ENCODE measurements at regions of chr12 and their contacts with region 1.

Region 1: DNA sequence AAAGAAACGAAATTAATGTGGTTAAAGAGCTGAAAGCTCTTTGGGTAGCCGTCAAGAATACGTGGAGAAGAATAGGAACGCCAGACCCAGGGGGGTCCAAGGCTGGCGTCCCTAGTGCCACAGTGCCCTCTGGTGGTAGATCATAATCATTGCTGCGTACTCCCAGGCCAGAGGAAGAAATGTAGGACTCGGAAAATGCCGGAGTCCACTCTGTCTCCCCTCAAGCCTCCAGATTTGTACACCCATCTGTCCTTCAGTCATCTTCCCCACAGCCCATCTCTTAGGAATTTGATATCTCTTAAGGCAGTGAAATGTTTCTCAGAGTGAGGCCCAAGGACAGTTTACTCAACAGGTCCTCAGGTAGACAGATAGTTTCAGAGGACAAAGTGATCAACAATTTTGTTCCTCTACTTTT is 25.4 kb upstream of the PLEKHG6 start:
- DNase-seq: peak; percentile 28 to 85 (median 48)
- ATAC-seq: peak; percentile 90
- H3K4me3 ChIP-seq: no peak overlapping the region
- H3K4me3 Mint-ChIP-seq: no peak overlapping the region
- H3K27ac ChIP-seq: no peak overlapping the region
- H3K27ac Mint-ChIP-seq: no peak overlapping the region
- H3K4me1 ChIP-seq: peaks cover 4% of the 10 kb centered on the region
- H3K4me1 Mint-ChIP-seq: peaks cover 5% of the 10 kb centered on the region
- H3K27me3 ChIP-seq: no peaks in the 10 kb centered on the region
- H3K27me3 Mint-ChIP-seq: peaks cover 14% of the 10 kb centered on the region
- CTCF ChIP-seq: peak; percentile 97

Region 2: GRCh38 chr12:5988659-5989116 is 296.4 kb before region 1 on chr12:
- CTCF ChIA-PET with region 1: interaction called, 4 read pairs
- POLR2A ChIA-PET with region 1: no interaction called
- intact Hi-C with region 1: loop called (anchors 1 kb)
- DNase-seq: peak; percentile 52 to 83 (median 63)
- ATAC-seq: peak; percentile 86
- H3K4me3 ChIP-seq: no peak overlapping the region
- H3K4me3 Mint-ChIP-seq: no peak overlapping the region
- H3K27ac ChIP-seq: no peak overlapping the region
- H3K27ac Mint-ChIP-seq: no peak overlapping the region
- H3K4me1 ChIP-seq: peaks cover 4% of the 10 kb centered on the region
- H3K4me1 Mint-ChIP-seq: no peaks in the 10 kb centered on the region
- H3K27me3 ChIP-seq: no peaks in the 10 kb centered on the region
- H3K27me3 Mint-ChIP-seq: no peaks in the 10 kb centered on the region
- CTCF ChIP-seq: peak; percentile 98

Region 3: GRCh38 chr12:6092784-6093722 is 192.0 kb before region 1 on chr12:
- CTCF ChIA-PET with region 1: no interaction called
- POLR2A ChIA-PET with region 1: no interaction called
- intact Hi-C with region 1: no loop called
- DNase-seq: peak in 2 of 14 experiments; percentile 32 to 48
- ATAC-seq: no peak
- H3K4me3 ChIP-seq: no peak overlapping the region
- H3K4me3 Mint-ChIP-seq: no peak overlapping the region
- H3K27ac ChIP-seq: no peak overlapping the region
- H3K27ac Mint-ChIP-seq: no peak overlapping the region
- H3K4me1 ChIP-seq: no peaks in the 10 kb centered on the region
- H3K4me1 Mint-ChIP-seq: peaks cover 5% of the 10 kb centered on the region
- H3K27me3 ChIP-seq: peaks cover 5 to 12% of the 10 kb centered on the region in 2 experiments
- H3K27me3 Mint-ChIP-seq: peaks cover 15% of the 10 kb centered on the region
- CTCF ChIP-seq: no peak

Measured in CD4-positive, alpha-beta T cell (primary cell).